Ascending aorta (tissue), 2 donors: ENCODE measurements at regions of chr11 and their contacts with region 1.

Region 1: GRCh38 chr11:18721561-18722292 is 4.3 kb downstream of the IGSF22 start:
- DNase-seq: no peak
- H3K4me3 ChIP-seq: peak overlapping the region; percentile 61 to 72
- H3K27ac ChIP-seq: peak overlapping the region; percentile 75 to 81
- H3K4me1 ChIP-seq: peaks cover 3 to 4% of the 10 kb centered on the region in 2 donors
- H3K27me3 ChIP-seq: no peaks in the 10 kb centered on the region
- CTCF ChIP-seq: peak; percentile 56 to 83 (median 69)

Region 2: DNA sequence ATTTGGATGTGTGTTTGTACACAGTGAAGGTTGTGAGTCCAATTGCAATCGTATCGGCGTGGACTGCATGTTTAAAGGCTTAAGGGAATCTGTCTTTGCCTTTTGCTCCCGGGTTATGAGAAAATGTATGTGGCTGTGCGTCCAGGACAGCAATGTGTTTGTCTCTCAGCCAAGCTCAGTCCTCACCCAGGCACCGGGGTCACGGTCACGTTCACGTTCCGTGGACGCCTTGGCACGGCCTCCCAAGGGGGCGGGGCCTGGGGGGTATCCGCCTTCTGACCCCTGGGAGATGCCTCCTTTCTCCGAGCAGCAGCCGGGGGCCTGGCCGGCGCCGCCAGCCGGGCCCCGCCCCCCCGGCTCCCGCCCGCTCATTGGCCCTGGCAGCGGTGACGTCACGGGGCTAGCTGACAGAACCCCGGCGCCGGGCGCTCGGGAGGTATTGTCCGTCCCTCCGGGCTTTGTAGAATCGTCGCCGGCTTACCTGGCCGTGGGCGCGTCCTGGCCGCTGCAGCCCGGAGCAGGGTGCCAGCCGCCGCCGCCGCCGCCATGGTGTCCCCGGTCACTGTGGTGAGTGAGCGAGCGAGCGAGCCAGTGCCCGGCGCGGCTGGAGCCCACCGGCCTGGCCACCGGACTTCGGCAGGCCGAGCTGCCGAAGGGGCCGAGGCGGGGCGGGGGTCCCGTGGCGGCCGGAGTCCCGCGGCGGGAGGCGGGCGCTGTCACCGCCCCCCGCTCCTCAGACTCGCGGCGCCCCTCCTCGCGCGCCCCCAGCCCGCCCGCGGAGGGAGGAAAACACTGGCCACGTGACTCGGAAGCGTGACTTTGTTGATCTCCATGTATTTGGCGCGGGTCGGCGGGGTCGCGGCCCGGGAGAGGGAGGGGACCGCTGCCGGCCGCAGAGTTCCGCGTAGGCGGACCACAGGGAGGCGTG is 23.1 kb before region 1 on chr11 and contains the start of gene TMEM86A:
- intact Hi-C with region 1: loop called (anchors 2 kb)
- DNase-seq: peak; percentile 88 to 98
- H3K4me3 ChIP-seq: peak within 1 kb of the TSS; percentile 96 to 99
- H3K27ac ChIP-seq: peak within 1 kb of the TSS; percentile 73 to 84
- H3K4me1 ChIP-seq: peaks cover 0 to 5% of the 10 kb centered on the region in 2 donors
- H3K27me3 ChIP-seq: no peaks in the 10 kb centered on the region
- CTCF ChIP-seq: no peak
- total RNA-seq, gene TMEM86A: 4.8 TPM